Endothelial cell of umbilical vein (primary cell): ENCODE measurements at regions of chr1 and their contacts with region 1.

Region 1: GRCh38 chr1:45266151-45266801 is 59.9 kb upstream of the ZSWIM5 start:
- DNase-seq: peak; percentile 97
- H3K4me3 ChIP-seq: no peak overlapping the region
- H3K27ac ChIP-seq: peak overlapping the region; percentile 95
- H3K4me1 ChIP-seq: peaks cover 26% of the 10 kb centered on the region
- H3K27me3 ChIP-seq: no peaks in the 10 kb centered on the region
- CTCF ChIP-seq: no peak
- POLR2A ChIP-seq: peak; percentile 70

Region 2: GRCh38 chr1:45177452-45177851 is 88.8 kb before region 1 on chr1:
- CTCF ChIA-PET with region 1: no interaction called
- POLR2A ChIA-PET with region 1: no interaction called
- dilution Hi-C with region 1: no loop called
- intact Hi-C with region 1: no loop called
- DNase-seq: no peak
- H3K4me3 ChIP-seq: no peak overlapping the region
- H3K27ac ChIP-seq: no peak overlapping the region
- H3K4me1 ChIP-seq: no peaks in the 10 kb centered on the region
- H3K27me3 ChIP-seq: no peaks in the 10 kb centered on the region
- CTCF ChIP-seq: no peak
- POLR2A ChIP-seq: no peak

Region 3: GRCh38 chr1:45246760-45247159 is 19.5 kb before region 1 on chr1:
- CTCF ChIA-PET with region 1: no interaction called
- POLR2A ChIA-PET with region 1: interaction called, 5 read pairs
- dilution Hi-C with region 1: no loop called
- intact Hi-C with region 1: loop called (anchors 1 kb)
- DNase-seq: peak; percentile 97
- H3K4me3 ChIP-seq: no peak overlapping the region
- H3K27ac ChIP-seq: peak overlapping the region; percentile 89
- H3K4me1 ChIP-seq: peaks cover 14% of the 10 kb centered on the region
- H3K27me3 ChIP-seq: no peaks in the 10 kb centered on the region
- CTCF ChIP-seq: no peak
- POLR2A ChIP-seq: no peak

Region 4: GRCh38 chr1:45282351-45282750 is 16.1 kb after region 1 on chr1:
- CTCF ChIA-PET with region 1: interaction called, 12 read pairs
- POLR2A ChIA-PET with region 1: interaction called, 3 read pairs
- dilution Hi-C with region 1: no loop called
- intact Hi-C with region 1: no loop called
- DNase-seq: peak; percentile 78
- H3K4me3 ChIP-seq: no peak overlapping the region
- H3K27ac ChIP-seq: no peak overlapping the region
- H3K4me1 ChIP-seq: peaks cover 6% of the 10 kb centered on the region
- H3K27me3 ChIP-seq: no peaks in the 10 kb centered on the region
- CTCF ChIP-seq: no peak
- POLR2A ChIP-seq: no peak